Heart right ventricle (tissue), 16 donors: ENCODE measurements at regions of chr6 and their contacts with region 1.

Region 1: GRCh38 chr6:142112451-142113061 is 20.2 kb upstream of the GJE1 start:
- DNase-seq: peak; percentile 27 to 59
- ATAC-seq: no peak
- H3K4me3 ChIP-seq: no peak overlapping the region
- H3K27ac ChIP-seq: no peak overlapping the region
- H3K4me1 ChIP-seq: no peaks in the 10 kb centered on the region
- H3K27me3 ChIP-seq: no peaks in the 10 kb centered on the region
- CTCF ChIP-seq: peak; percentile 33 to 77 (median 70)

Region 2: DNA sequence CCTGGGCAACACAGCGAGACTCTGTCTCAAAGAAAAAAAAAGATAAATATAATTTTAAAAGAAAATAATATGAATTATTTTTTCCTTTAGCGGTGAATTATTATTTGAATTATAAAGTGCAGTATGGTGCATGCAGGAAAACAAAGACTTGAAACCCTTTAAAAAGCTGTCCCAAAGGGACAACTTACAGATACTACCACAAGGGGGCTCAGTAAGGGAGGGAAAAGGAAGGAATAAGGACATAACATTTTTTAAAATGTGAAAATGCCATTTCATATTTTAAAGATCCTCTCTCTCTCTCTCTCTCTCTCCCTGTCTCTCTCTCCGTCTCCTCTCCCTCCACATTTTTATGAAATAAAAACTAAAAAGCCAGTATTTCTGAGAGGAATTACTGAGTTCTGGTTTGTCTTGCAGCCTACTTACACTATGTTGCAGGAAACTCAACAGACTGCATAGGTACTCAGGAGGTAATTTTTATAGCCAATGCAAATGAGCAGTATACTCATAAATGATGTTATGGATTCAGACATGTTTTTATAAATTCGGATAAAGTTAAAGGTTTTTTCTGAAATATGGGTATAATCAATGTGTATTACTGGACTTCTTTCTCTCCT is 434.9 kb before region 1 on chr6:
- intact Hi-C with region 1: loop called in 7 of 10 experiments (anchors 5 to 10 kb)
- DNase-seq: no peak
- ATAC-seq: no peak
- H3K4me3 ChIP-seq: no peak overlapping the region
- H3K27ac ChIP-seq: no peak overlapping the region
- H3K4me1 ChIP-seq: no peaks in the 10 kb centered on the region
- H3K27me3 ChIP-seq: no peaks in the 10 kb centered on the region
- CTCF ChIP-seq: peak in 8 of 9 donors; percentile 33 to 64 (median 57)

Region 3: DNA sequence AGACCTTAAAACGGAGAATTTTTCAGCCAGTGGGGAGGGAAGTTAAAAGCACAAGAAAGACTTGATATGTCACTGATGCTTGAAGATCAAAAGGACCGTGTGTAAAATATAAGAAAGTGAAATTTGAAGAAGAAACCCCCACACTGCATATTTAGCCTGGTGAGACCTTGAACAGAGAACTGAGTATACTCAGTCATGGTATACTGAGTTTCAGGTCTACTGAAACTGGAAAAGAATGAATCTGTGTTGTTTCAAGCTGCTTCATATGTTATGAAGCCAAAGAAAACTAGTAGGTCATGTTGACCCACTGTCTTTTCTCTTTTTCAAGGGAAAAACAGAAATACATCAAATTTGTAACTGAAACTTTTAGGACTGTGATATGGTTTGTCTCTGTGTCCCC is 423.6 kb before region 1 on chr6:
- intact Hi-C with region 1: loop called in 1 of 10 experiments (anchors 10 kb)
- DNase-seq: no peak
- ATAC-seq: no peak
- H3K4me3 ChIP-seq: no peak overlapping the region
- H3K27ac ChIP-seq: no peak overlapping the region
- H3K4me1 ChIP-seq: no peaks in the 10 kb centered on the region
- H3K27me3 ChIP-seq: no peaks in the 10 kb centered on the region
- CTCF ChIP-seq: no peak

Region 4: GRCh38 chr6:141988954-141989705 is 123.4 kb before region 1 on chr6:
- intact Hi-C with region 1: loop called in 1 of 10 experiments (anchors 10 kb)
- DNase-seq: no peak
- ATAC-seq: no peak
- H3K4me3 ChIP-seq: no peak overlapping the region
- H3K27ac ChIP-seq: no peak overlapping the region
- H3K4me1 ChIP-seq: no peaks in the 10 kb centered on the region
- H3K27me3 ChIP-seq: no peaks in the 10 kb centered on the region
- CTCF ChIP-seq: peak in 7 of 9 donors; percentile 34 to 59 (median 45)